ENCODE measurements at regions of chr19 and their contacts with region 1.

Region 1: GRCh38 chr19:35495107-35496064 is 5.1 kb upstream of the KRTDAP start:
- DNase-seq: peak; percentile 54
- ATAC-seq: peak; percentile 93
- H3K4me3 ChIP-seq: peak overlapping the region; percentile 25 to 66 (median 44); a peak in 4 of 6 replicates
- H3K27ac ChIP-seq: no peak overlapping the region
- H3K4me1 ChIP-seq: peaks cover 15% of the 10 kb centered on the region
- H3K27me3 ChIP-seq: no peaks in the 10 kb centered on the region
- CTCF ChIP-seq: peak; percentile 98
- EP300 ChIP-seq: no peak
- POLR2A ChIP-seq: no peak
- RAD21 ChIP-seq: peak; percentile 91

Region 2: GRCh38 chr19:35247526-35248306 is 247.7 kb before region 1 on chr19:
- CTCF ChIA-PET with region 1: no interaction called
- POLR2A ChIA-PET with region 1: no interaction called
- in situ Hi-C with region 1: no loop called
- intact Hi-C with region 1: loop called (anchors 10 kb)
- DNase-seq: peak; percentile 87
- ATAC-seq: peak; percentile 81
- H3K4me3 ChIP-seq: peak overlapping the region; percentile 74 to 99 (median 92)
- H3K27ac ChIP-seq: peak overlapping the region; percentile 98
- H3K4me1 ChIP-seq: peaks cover 31% of the 10 kb centered on the region
- H3K27me3 ChIP-seq: no peaks in the 10 kb centered on the region; a peak in 1 of 5 replicates
- CTCF ChIP-seq: peak; percentile 93
- EP300 ChIP-seq: no peak
- POLR2A ChIP-seq: peak in 1 of 2 experiments; percentile 36; a peak in 1 of 4 replicates
- RAD21 ChIP-seq: peak; percentile 84

Region 3: DNA sequence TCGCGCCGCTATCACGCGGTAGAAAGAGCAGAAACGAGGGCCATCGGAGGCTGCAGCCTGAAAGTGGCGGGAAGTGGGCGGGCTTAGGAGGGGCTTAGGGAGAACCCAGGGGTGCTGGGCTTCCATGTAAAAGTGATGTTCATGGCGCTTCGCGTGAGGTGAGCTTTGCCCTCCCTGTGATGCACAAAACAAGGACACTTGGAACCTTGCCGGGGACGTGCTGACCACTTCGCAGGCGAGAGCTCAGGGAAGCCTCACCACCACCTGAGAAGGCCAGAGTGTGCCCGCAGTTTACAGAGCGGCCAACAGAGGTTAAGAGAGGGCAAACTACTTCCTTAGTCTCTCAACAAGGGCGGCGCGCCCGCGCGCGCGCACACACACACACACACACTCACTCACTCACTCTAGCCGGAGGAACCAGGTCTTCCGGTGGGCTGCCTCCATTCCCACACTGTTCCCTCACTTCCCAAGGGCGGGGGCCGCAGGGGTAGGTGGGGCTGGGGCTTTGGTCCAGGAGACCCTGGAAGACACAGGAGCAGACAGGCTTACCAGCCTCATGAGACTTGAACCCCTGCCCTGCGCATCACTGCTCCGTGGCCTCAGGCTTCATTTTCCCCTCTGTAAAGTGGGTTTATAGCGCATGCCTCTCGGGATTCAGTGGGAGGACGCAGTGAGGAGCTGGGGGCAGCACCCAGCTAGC is 38.6 kb after region 1 on chr19:
- CTCF ChIA-PET with region 1: no interaction called
- POLR2A ChIA-PET with region 1: no interaction called
- in situ Hi-C with region 1: no loop called
- intact Hi-C with region 1: no loop called
- DNase-seq: peak; percentile 23
- ATAC-seq: peak; percentile 66
- H3K4me3 ChIP-seq: peak overlapping the region in 1 of 3 experiments; percentile 26; a peak in 1 of 6 replicates
- H3K27ac ChIP-seq: no peak overlapping the region
- H3K4me1 ChIP-seq: peaks cover 29% of the 10 kb centered on the region
- H3K27me3 ChIP-seq: peaks cover 5 to 10% of the 10 kb centered on the region in 2 experiments; a peak in 4 of 5 replicates
- CTCF ChIP-seq: no peak
- EP300 ChIP-seq: no peak
- POLR2A ChIP-seq: no peak
- RAD21 ChIP-seq: no peak

Region 4: GRCh38 chr19:35557539-35558399 is 62.4 kb after region 1 on chr19:
- CTCF ChIA-PET with region 1: no interaction called
- POLR2A ChIA-PET with region 1: no interaction called
- in situ Hi-C with region 1: no loop called
- intact Hi-C with region 1: no loop called
- DNase-seq: no peak
- ATAC-seq: peak; percentile 46
- H3K4me3 ChIP-seq: peak overlapping the region in 2 of 3 experiments; percentile 36 to 56; a peak in 3 of 6 replicates
- H3K27ac ChIP-seq: no peak overlapping the region
- H3K4me1 ChIP-seq: peaks cover 33% of the 10 kb centered on the region
- H3K27me3 ChIP-seq: peaks cover 1 to 54% of the 10 kb centered on the region in 2 experiments; a peak in 3 of 5 replicates
- CTCF ChIP-seq: peak; percentile 63
- EP300 ChIP-seq: no peak
- POLR2A ChIP-seq: no peak
- RAD21 ChIP-seq: no peak

Measured in HepG2 (cell line).